ENCODE measurements at regions of chr9 and their contacts with region 1.

Region 1: DNA sequence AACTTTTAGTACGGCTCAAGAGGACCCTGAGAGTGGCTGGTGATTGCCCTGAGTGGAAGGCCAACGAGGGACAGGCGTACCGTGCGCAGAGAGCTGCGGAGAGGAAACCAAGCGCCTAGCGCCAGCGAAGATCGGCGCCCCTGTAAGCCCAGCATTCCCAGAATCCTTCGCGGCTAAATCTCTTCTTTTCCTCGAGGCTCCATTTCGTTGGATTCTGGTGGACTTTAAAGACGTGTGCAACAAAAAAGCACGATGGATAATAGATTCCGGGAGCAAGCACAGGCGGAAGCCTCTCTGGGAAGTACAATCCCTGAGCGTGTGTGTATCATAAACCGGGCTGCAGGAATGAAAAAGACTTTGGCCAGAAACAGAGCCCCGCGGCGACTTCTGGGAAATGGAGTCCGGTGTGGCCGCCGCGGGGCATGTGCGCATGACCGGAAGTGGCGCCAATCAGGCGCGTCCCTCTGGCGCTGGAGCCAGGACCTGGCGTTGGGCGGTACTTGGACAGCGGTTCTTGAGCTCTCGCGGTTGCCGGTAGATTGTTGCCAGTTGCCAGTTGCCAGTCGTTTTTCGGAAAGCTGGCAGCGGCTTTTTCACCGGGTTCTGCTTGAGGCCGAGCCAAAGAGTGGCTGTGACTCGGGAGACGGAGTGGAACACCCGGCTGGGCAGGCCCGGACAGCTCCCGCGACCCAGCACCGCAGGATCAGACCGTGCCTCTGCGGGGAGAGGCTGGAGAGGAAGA is at the start of gene ZNF79:
- DNase-seq: peak; percentile 80 to 94 (median 86)
- ATAC-seq: peak; percentile 87
- H3K4me3 ChIP-seq: peak within 1 kb of the TSS; percentile 93
- H3K4me3 Mint-ChIP-seq: peak within 1 kb of the TSS; percentile 99
- H3K27ac ChIP-seq: peak within 1 kb of the TSS; percentile 63 to 78
- H3K27ac Mint-ChIP-seq: peak within 1 kb of the TSS; percentile 90
- H3K4me1 ChIP-seq: peaks cover 32% of the 10 kb centered on the region
- H3K4me1 Mint-ChIP-seq: peaks cover 45% of the 10 kb centered on the region
- H3K27me3 ChIP-seq: no peaks in the 10 kb centered on the region
- H3K27me3 Mint-ChIP-seq: no peaks in the 10 kb centered on the region
- CTCF ChIP-seq: no peak
- total RNA-seq, gene ZNF79: 4.3 to 4.9 TPM

Region 2: GRCh38 chr9:126914458-126915280 is 509.4 kb before region 1 on chr9 and contains the start of gene RALGPS1:
- CTCF ChIA-PET with region 1: no interaction called
- POLR2A ChIA-PET with region 1: no interaction called
- intact Hi-C with region 1: loop called in 1 of 2 experiments (anchors 10 kb)
- DNase-seq: peak; percentile 76 to 95 (median 84)
- ATAC-seq: peak; percentile 93
- H3K4me3 ChIP-seq: peak within 1 kb of the TSS; percentile 46
- H3K4me3 Mint-ChIP-seq: peak within 1 kb of the TSS; percentile 91
- H3K27ac ChIP-seq: no peak within 1 kb of the TSS
- H3K27ac Mint-ChIP-seq: no peak within 1 kb of the TSS
- H3K4me1 ChIP-seq: peaks cover 12% of the 10 kb centered on the region
- H3K4me1 Mint-ChIP-seq: peaks cover 7% of the 10 kb centered on the region
- H3K27me3 ChIP-seq: no peaks in the 10 kb centered on the region
- H3K27me3 Mint-ChIP-seq: no peaks in the 10 kb centered on the region
- CTCF ChIP-seq: no peak
- total RNA-seq, gene RALGPS1: 5.8 to 6.3 TPM

Region 3: DNA sequence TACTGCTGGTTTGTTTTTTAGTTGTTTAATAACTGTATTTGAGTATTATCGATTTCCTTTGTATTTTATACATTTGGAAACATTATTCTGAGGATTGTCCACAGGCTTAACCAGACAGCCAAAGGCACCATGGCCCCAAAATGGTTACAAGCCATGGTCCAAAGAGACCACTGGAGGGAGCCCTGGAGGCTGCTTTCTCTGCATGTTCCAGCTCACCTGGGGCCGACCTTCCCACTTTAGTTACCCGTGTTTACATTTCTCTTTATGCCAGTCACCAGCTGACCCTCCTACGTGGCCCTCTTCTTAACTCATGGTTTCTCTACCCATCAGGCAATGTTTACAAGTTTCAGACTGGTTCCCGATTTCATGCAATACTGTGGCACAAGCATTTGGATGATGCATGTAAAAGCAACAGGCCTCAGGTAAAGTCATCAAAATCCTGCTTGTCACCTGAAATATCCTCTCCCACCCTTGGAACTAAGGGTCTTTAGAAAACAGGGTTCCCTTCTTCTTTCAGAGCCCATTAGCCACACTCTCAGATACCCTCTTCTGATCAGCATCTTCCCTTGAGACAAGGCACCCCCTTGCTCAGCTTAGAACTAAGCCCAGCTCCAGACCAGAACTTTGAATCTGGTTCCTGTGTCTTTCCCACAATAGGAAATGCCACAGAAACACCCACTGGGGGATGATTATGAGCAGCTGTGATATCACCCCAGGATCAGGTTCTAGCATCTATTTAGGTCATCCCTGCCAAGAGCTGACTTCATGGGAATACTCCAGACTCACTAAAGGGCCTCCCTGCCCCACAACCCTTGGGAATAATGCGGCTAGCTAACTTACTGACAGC is 209.5 kb before region 1 on chr9:
- CTCF ChIA-PET with region 1: no interaction called
- POLR2A ChIA-PET with region 1: no interaction called
- intact Hi-C with region 1: loop called in 1 of 2 experiments (anchors 1 kb)
- DNase-seq: peak; percentile 40 to 78 (median 54)
- ATAC-seq: peak; percentile 92
- H3K4me3 ChIP-seq: no peak overlapping the region
- H3K4me3 Mint-ChIP-seq: no peak overlapping the region
- H3K27ac ChIP-seq: no peak overlapping the region
- H3K27ac Mint-ChIP-seq: no peak overlapping the region
- H3K4me1 ChIP-seq: no peaks in the 10 kb centered on the region
- H3K4me1 Mint-ChIP-seq: peaks cover 5% of the 10 kb centered on the region
- H3K27me3 ChIP-seq: no peaks in the 10 kb centered on the region
- H3K27me3 Mint-ChIP-seq: peaks cover 16% of the 10 kb centered on the region
- CTCF ChIP-seq: peak; percentile 83

Region 4: GRCh38 chr9:127244609-127245601 is 179.2 kb before region 1 on chr9:
- CTCF ChIA-PET with region 1: no interaction called
- POLR2A ChIA-PET with region 1: no interaction called
- intact Hi-C with region 1: loop called in 1 of 2 experiments (anchors 5 kb)
- DNase-seq: peak; percentile 86 to 96 (median 94)
- ATAC-seq: peak; percentile 100
- H3K4me3 ChIP-seq: peak overlapping the region; percentile 56
- H3K4me3 Mint-ChIP-seq: peak overlapping the region; percentile 81
- H3K27ac ChIP-seq: no peak overlapping the region
- H3K27ac Mint-ChIP-seq: no peak overlapping the region
- H3K4me1 ChIP-seq: peaks cover 13% of the 10 kb centered on the region
- H3K4me1 Mint-ChIP-seq: peaks cover 12% of the 10 kb centered on the region
- H3K27me3 ChIP-seq: no peaks in the 10 kb centered on the region
- H3K27me3 Mint-ChIP-seq: peaks cover 20% of the 10 kb centered on the region
- CTCF ChIP-seq: no peak

Region 5: DNA sequence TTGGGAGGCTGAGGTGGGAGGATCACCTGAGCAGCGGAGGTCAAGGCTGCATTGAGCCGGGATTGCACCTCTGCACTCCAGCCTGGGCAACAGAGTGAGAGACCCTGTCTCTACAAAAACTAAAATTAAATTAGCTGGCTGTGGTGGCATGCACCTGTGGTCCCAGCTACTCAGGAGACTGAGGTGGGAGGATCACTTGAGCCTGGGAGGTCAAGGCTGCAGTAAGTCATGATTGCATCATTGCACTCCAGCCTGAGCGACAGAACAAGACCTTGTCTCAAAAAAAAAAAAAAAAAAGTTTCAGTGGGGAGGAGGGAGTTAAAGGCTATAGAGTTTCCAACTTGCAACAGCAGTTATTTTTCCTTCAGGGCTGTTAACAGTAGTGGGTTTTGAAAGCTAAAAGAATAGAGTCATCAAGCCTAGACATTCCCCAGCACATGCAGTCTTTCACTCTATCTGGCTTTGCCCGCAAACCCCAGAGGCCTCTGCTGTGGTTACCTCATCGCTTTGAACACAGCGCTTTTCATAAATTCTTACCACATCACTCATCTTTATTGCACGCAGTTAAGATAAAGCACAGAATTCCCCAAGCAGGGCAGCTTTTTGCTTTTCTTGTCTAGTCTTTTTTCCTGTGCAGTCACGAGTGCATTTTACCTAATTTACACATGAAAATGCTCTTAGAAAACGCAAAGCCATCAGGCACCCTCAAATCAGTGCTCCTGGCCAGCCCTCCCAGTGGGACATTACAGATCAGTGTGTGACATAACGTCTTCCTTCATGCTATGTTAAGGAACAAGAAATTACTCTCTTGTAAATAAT is 35.9 kb before region 1 on chr9:
- CTCF ChIA-PET with region 1: no interaction called
- POLR2A ChIA-PET with region 1: interaction called, 3 read pairs
- intact Hi-C with region 1: loop called in 1 of 2 experiments (anchors 2 kb)
- DNase-seq: peak; percentile 75 to 96 (median 82)
- ATAC-seq: peak; percentile 96
- H3K4me3 ChIP-seq: no peak overlapping the region
- H3K4me3 Mint-ChIP-seq: peak overlapping the region; percentile 42
- H3K27ac ChIP-seq: no peak overlapping the region
- H3K27ac Mint-ChIP-seq: peak overlapping the region; percentile 37
- H3K4me1 ChIP-seq: peaks cover 23% of the 10 kb centered on the region
- H3K4me1 Mint-ChIP-seq: peaks cover 26% of the 10 kb centered on the region
- H3K27me3 ChIP-seq: peaks cover 69 to 75% of the 10 kb centered on the region in 2 experiments
- H3K27me3 Mint-ChIP-seq: peaks cover 86% of the 10 kb centered on the region
- CTCF ChIP-seq: no peak

Region 6: DNA sequence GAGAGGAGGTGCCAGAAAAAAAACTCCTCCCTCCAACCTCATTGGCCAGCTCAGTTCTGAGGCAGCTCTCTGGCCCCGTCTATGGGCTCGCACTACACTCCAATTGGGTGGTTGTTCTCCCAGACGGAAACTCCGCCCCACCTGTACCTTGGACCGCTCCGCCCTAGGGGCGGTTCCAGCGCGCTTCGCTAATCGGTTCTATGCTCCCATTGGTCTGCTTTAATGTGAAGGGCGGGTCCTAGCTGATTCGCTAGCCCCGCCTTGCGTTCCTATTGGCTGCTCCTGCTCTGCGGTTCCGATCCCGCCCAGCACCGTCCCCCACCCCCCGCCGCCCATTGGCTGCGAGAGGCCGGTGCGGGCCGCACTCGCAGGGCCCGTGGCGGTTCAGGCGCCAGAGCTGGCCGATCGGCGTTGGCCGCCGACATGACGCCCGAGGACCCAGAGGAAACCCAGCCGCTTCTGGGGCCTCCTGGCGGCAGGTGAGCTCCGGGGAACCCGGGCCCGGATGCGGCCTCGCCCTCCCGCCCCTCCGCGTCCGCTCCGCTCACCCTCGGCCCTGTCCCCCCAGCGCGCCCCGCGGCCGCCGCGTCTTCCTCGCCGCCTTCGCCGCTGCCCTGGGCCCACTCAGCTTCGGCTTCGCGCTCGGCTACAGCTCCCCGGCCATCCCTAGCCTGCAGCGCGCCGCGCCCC is 27.2 kb before region 1 on chr9 and contains the start of gene SLC2A8:
- CTCF ChIA-PET with region 1: interaction called, 3 read pairs
- POLR2A ChIA-PET with region 1: interaction called, 3 read pairs
- intact Hi-C with region 1: loop called in 1 of 2 experiments (anchors 2 kb)
- DNase-seq: peak; percentile 63 to 98 (median 76)
- ATAC-seq: peak; percentile 92
- H3K4me3 ChIP-seq: peak within 1 kb of the TSS; percentile 44
- H3K4me3 Mint-ChIP-seq: peak within 1 kb of the TSS; percentile 75
- H3K27ac ChIP-seq: no peak within 1 kb of the TSS
- H3K27ac Mint-ChIP-seq: no peak within 1 kb of the TSS
- H3K4me1 ChIP-seq: peaks cover 28% of the 10 kb centered on the region
- H3K4me1 Mint-ChIP-seq: peaks cover 21% of the 10 kb centered on the region
- H3K27me3 ChIP-seq: peaks cover 66 to 83% of the 10 kb centered on the region in 2 experiments
- H3K27me3 Mint-ChIP-seq: peaks cover 87% of the 10 kb centered on the region
- CTCF ChIP-seq: peak; percentile 18
- total RNA-seq, gene SLC2A8: 1.6 to 1.8 TPM

Region 7: DNA sequence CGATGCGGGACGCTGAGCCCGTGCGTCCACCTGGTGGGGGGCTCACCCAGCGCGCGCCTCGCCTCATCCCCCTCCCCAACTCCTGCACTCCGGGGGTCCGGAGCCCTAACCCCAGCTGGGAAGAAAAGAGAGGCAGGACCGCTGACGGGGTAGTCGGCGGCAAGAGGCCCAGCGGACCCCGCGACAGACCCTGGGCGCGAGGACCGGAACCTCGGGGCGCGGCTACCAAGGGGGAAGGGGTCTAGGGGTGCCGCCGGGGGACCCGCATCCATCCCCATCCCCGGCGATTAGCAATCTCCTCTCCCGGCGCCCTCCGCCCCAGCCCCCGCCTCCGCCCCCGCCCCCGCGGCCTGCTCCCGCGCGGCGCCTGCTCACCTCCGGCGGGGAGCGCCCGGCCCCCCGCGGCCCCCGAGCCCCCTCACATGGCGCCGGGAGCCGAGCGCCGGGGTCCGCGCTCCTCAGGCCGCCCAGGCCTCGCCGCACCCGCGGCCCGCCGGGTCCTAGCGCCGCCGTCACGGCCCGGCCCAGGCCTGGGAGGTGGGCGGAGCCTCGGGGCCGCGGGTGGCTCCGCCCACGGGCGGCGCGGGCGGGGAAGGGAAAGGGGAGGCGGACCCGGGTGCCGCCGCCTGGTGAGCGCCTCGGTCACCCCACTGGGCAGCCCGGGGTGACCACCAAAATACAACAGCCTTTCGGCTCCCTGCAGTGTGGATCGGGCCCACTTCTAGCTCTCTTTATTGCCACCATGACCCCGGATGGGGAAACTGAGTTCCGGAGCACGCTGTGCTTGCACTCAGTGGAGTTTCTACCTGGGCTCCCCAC is 475.2 kb after region 1 on chr9 and contains the start of gene ST6GALNAC6:
- CTCF ChIA-PET with region 1: no interaction called
- POLR2A ChIA-PET with region 1: no interaction called
- intact Hi-C with region 1: no loop called
- DNase-seq: peak in 13 of 14 experiments; percentile 32 to 86 (median 61)
- ATAC-seq: peak; percentile 76
- H3K4me3 ChIP-seq: peak within 1 kb of the TSS; percentile 89
- H3K4me3 Mint-ChIP-seq: peak within 1 kb of the TSS; percentile 95
- H3K27ac ChIP-seq: peak within 1 kb of the TSS; percentile 36 to 56
- H3K27ac Mint-ChIP-seq: peak within 1 kb of the TSS; percentile 86
- H3K4me1 ChIP-seq: peaks cover 64% of the 10 kb centered on the region
- H3K4me1 Mint-ChIP-seq: peaks cover 45% of the 10 kb centered on the region
- H3K27me3 ChIP-seq: no peaks in the 10 kb centered on the region
- H3K27me3 Mint-ChIP-seq: no peaks in the 10 kb centered on the region
- CTCF ChIP-seq: no peak
- total RNA-seq, gene ST6GALNAC6: 93.1 to 97.5 TPM

Measured in CD4-positive, alpha-beta T cell (primary cell).